ENCODE measurements at regions of chr11 and their contacts with region 1.

Region 1: DNA sequence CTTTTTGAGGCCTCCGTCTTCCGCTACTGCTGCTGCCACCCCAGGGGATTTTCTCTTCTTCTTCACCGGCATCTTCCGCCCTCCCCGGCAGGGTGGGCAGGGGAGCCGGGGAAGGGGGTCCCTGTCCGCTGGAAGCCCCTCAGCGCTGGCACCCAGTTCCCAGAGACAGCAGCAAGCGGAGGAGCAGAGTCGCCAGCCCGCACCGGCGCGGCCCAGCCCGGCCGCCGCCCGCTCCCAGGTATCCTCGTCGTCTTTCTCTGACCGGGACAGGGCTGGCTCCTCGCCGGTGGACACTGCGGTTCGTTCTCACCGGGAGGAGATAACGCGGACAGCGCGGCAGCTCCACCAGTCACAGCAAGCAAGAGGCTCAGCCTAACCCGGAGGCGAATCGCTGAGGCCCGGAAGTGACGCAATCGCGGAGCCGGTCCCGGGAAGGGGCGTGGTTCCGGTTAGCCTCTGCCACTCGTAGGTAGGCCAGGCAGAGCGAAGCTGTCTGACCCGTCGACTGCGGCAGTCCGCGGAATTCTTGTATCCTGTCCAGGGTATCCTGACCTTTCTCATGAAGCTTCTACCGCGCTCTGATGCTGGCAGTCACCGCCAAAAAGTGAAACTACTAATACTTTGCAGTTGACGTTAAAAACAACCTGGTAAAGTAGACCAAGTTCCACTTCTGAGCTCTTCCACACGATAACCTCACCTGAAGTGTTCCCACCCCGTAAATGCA is at the start of gene DCUN1D5:
- DNase-seq: peak; percentile 93
- H3K27ac ChIP-seq: peak within 1 kb of the TSS; percentile 88
- CTCF ChIP-seq: no peak

Region 2: GRCh38 chr11:103108933-103109817 is 17.2 kb after region 1 on chr11 and contains the start of gene DYNC2H1:
- CTCF ChIA-PET with region 1: interaction called, 4 read pairs
- POLR2A ChIA-PET with region 1: interaction called, 11 read pairs
- DNase-seq: peak; percentile 92
- H3K27ac ChIP-seq: peak within 1 kb of the TSS; percentile 90
- CTCF ChIP-seq: peak; percentile 73

Region 3: GRCh38 chr11:103281303-103281702 is 189.3 kb after region 1 on chr11:
- CTCF ChIA-PET with region 1: no interaction called
- POLR2A ChIA-PET with region 1: no interaction called
- DNase-seq: no peak
- H3K27ac ChIP-seq: no peak overlapping the region
- CTCF ChIP-seq: no peak

Region 4: DNA sequence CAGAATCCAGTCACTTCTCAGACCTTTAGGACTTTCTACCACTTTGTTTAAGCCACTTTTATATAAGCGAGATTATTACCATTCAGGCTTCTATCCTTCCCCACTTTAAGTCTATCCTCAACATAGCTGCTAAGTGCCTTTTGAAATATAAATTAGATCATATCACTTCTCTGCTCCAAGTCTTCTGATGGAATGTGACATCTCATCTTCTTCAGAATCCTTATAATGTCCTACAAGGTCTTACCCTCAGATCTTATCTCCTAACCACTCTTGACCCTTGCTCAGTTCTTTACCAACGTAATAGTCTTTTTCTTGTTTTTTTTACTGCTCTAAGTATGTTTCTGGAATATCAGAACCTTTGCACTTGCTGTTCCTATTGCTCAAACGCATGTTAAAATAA is 205.9 kb after region 1 on chr11:
- CTCF ChIA-PET with region 1: no interaction called
- POLR2A ChIA-PET with region 1: no interaction called
- DNase-seq: no peak
- H3K27ac ChIP-seq: no peak overlapping the region
- CTCF ChIP-seq: no peak